ENCODE measurements at regions of chr14 and their contacts with region 1.

Region 1: DNA sequence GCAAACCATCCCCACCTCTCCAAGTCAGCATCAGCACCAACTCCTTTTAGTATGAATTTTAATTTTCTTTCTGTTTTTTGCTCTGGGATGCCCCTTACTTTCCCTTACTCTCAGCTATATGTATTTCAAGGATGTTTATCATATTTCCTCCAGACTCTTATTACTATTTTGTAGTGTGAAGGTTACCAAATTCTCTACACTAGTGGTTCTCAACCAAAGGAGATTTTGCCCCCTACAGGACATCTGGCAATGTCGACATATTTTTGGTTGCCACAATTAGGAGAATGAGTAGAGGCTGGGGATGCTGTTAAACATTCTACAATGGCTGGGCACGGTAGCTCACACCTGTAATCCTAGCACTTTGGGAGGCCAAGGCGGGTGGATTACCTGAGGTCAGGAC is 29.1 kb upstream of the SOS2 start:
- DNase-seq: peak in 2 of 5 donors; percentile 11 to 16
- H3K4me3 ChIP-seq: no peak overlapping the region
- H3K4me3 Mint-ChIP-seq: no peak overlapping the region
- H3K27ac ChIP-seq: no peak overlapping the region
- H3K27ac Mint-ChIP-seq: peak overlapping the region in 2 of 8 donors; percentile 6 to 63
- H3K4me1 ChIP-seq: no peaks in the 10 kb centered on the region
- H3K4me1 Mint-ChIP-seq: peaks cover 0 to 1% (median 0%) of the 10 kb centered on the region in 3 donors
- H3K27me3 ChIP-seq: no peaks in the 10 kb centered on the region
- H3K27me3 Mint-ChIP-seq: no peaks in the 10 kb centered on the region

Region 2: DNA sequence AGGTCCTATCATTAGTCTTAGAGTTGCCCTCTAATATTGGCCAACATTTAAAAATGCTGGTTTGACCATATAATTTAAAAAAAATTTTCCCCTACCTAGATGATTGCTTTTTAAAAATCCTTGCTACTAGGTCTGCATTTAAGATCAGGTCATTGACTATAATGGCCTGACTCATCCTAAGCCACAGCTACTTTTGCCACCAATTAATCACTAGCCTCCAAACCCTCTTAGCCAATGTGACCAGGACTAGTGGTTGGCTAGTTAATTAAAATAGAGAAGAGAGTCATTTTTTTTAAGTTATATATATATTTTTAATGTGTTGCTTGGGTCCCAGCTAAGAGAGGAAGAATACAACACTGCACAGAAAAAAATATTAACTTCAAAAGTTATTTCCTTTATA is 86.6 kb before region 1 on chr14:
- CTCF ChIA-PET with region 1: no interaction called
- POLR2A ChIA-PET with region 1: no interaction called
- DNase-seq: no peak
- H3K4me3 ChIP-seq: no peak overlapping the region
- H3K4me3 Mint-ChIP-seq: no peak overlapping the region
- H3K27ac ChIP-seq: no peak overlapping the region
- H3K27ac Mint-ChIP-seq: no peak overlapping the region
- H3K4me1 ChIP-seq: no peaks in the 10 kb centered on the region
- H3K4me1 Mint-ChIP-seq: no peaks in the 10 kb centered on the region
- H3K27me3 ChIP-seq: no peaks in the 10 kb centered on the region
- H3K27me3 Mint-ChIP-seq: no peaks in the 10 kb centered on the region

Region 3: DNA sequence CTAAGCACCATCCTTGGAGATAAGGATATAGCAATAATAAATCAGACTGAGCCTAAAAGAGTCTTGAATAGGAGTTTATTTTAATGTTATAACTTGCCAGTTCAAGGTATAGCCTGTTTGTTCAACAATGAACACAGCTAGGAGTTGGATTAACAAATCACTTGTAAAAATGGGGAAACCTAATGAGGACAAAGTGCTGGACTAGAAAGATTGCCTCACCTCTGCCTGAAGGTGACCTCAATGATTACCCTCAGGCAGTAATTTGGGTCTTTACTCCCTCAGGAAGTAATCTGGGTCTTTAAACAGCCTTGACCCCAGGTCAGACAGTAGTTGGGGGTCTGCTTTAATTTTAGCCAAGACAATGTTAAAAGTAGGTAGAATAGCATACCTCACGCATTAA is 171.6 kb after region 1 on chr14:
- CTCF ChIA-PET with region 1: no interaction called
- POLR2A ChIA-PET with region 1: interaction called, 10 read pairs
- DNase-seq: no peak
- H3K4me3 ChIP-seq: no peak overlapping the region
- H3K4me3 Mint-ChIP-seq: no peak overlapping the region
- H3K27ac ChIP-seq: no peak overlapping the region
- H3K27ac Mint-ChIP-seq: no peak overlapping the region
- H3K4me1 ChIP-seq: no peaks in the 10 kb centered on the region
- H3K4me1 Mint-ChIP-seq: no peaks in the 10 kb centered on the region
- H3K27me3 ChIP-seq: no peaks in the 10 kb centered on the region
- H3K27me3 Mint-ChIP-seq: no peaks in the 10 kb centered on the region

Measured in CD8-positive, alpha-beta memory T cell (primary cell).